ENCODE measurements at regions of chr14 and their contacts with region 1.

Region 1: GRCh38 chr14:99899578-99900178 is 106.5 kb downstream of the EML1 start:
- DNase-seq: no peak
- H3K4me3 ChIP-seq: no peak overlapping the region
- CTCF ChIP-seq: peak; percentile 32

Region 2: GRCh38 chr14:99683619-99684355 is 215.9 kb before region 1 on chr14 and contains the start of gene CYP46A1:
- CTCF ChIA-PET with region 1: interaction called, 16 read pairs
- POLR2A ChIA-PET with region 1: no interaction called
- DNase-seq: peak; percentile 92
- H3K4me3 ChIP-seq: peak within 1 kb of the TSS; percentile 80
- CTCF ChIP-seq: no peak

Region 3: DNA sequence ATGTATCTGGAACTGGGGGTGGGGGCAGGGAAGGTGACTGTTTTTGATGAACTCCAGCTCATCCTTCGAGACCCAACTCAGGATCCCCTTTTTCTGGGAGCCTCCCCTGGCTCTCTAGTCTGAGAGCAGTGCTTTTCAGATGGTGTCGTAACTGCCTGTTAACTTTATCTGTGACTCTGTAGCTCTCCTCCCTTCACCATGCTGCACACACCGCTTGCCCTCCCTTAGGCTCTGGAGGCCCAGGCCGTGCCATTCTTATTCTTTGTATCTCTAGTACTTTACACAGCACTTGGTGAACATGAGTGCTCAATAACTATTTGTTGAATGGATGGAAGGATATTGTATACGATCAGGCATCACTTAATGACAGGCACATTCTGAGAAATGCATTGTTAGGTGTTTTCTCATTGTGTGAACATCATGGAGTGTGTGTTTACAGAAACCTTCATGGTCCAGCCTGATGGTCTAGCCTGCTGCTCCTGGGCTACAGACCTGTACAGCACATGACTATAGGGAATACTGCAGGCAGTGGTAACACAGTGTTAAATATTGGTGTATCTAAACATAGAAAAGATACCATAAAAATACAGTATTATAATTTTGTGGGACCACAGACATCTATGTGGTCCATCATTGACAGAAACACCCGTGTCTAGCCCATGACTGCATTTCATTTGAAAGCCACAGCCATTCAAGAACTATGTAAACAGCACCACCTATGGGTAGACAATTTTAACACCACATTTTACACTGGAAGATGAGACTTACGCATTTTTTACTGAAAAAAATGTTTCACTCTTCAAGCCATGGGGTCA is 14.6 kb before region 1 on chr14:
- CTCF ChIA-PET with region 1: interaction called, 93 read pairs
- POLR2A ChIA-PET with region 1: no interaction called
- DNase-seq: no peak
- H3K4me3 ChIP-seq: no peak overlapping the region
- CTCF ChIP-seq: peak; percentile 42

Region 4: DNA sequence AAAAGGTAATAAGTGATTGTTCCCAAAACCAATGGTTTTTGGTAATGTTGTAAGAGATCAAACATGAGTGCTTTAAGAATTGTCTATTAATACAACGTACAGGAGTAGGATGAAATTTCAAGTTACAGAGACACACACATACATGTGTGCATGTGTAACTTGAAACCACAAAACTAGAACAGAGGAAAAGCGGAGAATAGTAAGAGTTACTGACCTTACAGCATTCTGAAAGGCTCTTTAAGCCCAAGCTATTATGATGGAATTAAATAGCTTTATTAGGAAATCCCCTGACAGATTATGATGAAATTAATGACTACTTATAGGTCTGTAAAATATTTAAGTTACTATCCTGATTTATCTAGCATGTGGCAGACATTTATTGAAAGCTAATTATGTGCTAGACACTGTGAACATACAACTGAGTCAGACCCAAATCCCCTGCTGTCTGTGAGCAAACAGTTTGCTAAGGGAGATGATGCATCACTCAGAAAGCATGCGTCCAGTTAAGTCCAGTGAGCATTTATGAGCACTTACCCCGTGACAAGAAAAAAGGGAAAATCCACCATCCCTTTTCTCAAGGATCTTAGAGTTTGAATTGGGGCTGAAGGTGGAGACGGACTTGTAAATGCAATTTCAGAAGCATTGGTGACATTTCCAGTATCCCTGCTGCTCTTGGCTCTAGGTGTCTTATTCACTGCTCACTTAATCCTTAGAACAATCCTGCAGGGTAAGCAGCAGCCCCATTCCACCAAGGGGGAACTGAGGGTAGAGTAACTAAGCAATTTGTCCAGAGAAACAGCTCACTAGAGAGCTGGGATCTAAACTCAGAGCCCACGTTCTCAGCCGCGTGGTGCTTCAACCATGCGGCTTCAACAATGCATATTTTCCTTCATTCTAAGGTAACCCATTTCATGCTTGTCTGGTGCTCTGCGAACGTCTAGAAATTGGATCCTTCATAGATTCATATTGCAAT is 10.9 kb after region 1 on chr14:
- CTCF ChIA-PET with region 1: interaction called, 43 read pairs
- POLR2A ChIA-PET with region 1: no interaction called
- DNase-seq: peak; percentile 87
- H3K4me3 ChIP-seq: no peak overlapping the region
- CTCF ChIP-seq: no peak

Region 5: GRCh38 chr14:99918781-99919180 is 19.1 kb after region 1 on chr14:
- CTCF ChIA-PET with region 1: interaction called, 15 read pairs
- POLR2A ChIA-PET with region 1: no interaction called
- DNase-seq: no peak
- H3K4me3 ChIP-seq: no peak overlapping the region
- CTCF ChIP-seq: no peak